ENCODE measurements at regions of chr15 and their contacts with region 1.

Region 1: DNA sequence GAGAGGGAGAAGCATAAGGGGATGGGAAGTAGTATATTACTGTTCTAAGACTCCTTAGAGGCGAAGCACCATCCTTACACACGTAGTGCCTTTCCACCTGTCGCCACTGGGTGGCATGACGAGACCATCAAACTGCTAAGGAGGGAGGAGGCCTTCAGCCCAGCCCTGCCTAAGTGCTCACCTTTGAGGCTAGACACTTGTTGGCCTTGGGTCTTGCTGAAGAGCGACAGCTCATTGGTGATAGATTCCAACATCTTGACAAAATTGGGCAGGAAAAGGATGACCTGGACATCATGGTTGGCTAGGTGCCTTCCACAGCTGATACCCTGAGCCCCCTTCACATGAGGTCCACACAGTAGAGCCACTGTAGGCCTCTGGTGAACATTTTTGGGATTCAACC is 19.6 kb downstream of the CLK3 start:
- DNase-seq: peak; percentile 84
- ATAC-seq: peak; percentile 94
- H3K4me3 Mint-ChIP-seq: no peak overlapping the region
- H3K27ac Mint-ChIP-seq: peak overlapping the region; percentile 39
- H3K4me1 Mint-ChIP-seq: no peaks in the 10 kb centered on the region
- H3K27me3 Mint-ChIP-seq: no peaks in the 10 kb centered on the region
- CTCF ChIP-seq: peak; percentile 89

Region 2: GRCh38 chr15:74352393-74352910 is 282.8 kb before region 1 on chr15:
- CTCF ChIA-PET with region 1: no interaction called
- POLR2A ChIA-PET with region 1: no interaction called
- intact Hi-C with region 1: no loop called
- DNase-seq: no peak
- ATAC-seq: no peak
- H3K4me3 Mint-ChIP-seq: no peak overlapping the region
- H3K27ac Mint-ChIP-seq: no peak overlapping the region
- H3K4me1 Mint-ChIP-seq: no peaks in the 10 kb centered on the region
- H3K27me3 Mint-ChIP-seq: peaks cover 3% of the 10 kb centered on the region
- CTCF ChIP-seq: no peak

Region 3: GRCh38 chr15:74373731-74374647 is 261.2 kb before region 1 on chr15:
- CTCF ChIA-PET with region 1: interaction called, 21 read pairs
- POLR2A ChIA-PET with region 1: interaction called, 3 read pairs
- intact Hi-C with region 1: loop called (anchors 5 kb)
- DNase-seq: peak; percentile 97
- ATAC-seq: peak; percentile 90
- H3K4me3 Mint-ChIP-seq: peak overlapping the region; percentile 74
- H3K27ac Mint-ChIP-seq: peak overlapping the region; percentile 63
- H3K4me1 Mint-ChIP-seq: peaks cover 39% of the 10 kb centered on the region
- H3K27me3 Mint-ChIP-seq: peaks cover 6% of the 10 kb centered on the region
- CTCF ChIP-seq: peak; percentile 92

Region 4: DNA sequence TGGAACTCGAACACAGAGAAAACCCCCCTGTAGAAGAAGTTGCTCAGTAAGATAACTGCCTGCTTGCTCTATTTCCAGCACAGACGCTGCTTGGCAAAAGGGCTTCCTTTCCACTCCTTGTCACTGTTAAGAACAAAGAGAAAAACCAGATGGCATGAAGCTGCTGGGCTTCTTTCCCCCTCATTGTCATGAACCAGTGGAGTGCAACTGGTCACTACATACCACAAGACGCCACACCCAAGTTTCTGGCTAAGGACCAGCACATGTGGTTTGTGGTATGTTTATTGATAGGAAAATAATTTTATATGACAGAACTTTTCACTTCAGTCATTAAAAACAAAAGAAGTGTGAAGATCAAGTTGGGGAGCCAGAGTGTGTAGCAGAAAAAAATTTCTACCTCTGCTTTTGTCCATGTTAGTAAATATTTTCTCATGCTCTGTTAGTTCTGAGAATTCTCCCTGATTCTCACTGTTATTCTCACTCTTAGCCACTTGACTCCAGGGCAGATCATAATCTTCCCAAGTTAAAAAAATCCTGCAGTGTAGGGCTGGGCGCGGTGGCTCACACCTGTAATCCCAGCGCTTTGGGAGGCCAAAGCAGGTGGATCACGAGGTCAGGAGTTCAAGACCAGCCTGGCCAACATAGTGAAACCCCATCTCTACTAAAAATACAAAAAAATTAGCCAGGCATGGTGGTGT is 18.3 kb after region 1 on chr15:
- CTCF ChIA-PET with region 1: interaction called, 16 read pairs
- POLR2A ChIA-PET with region 1: interaction called, 3 read pairs
- intact Hi-C with region 1: no loop called
- DNase-seq: no peak
- ATAC-seq: no peak
- H3K4me3 Mint-ChIP-seq: no peak overlapping the region
- H3K27ac Mint-ChIP-seq: no peak overlapping the region
- H3K4me1 Mint-ChIP-seq: peaks cover 14% of the 10 kb centered on the region
- H3K27me3 Mint-ChIP-seq: no peaks in the 10 kb centered on the region
- CTCF ChIP-seq: no peak

Region 5: DNA sequence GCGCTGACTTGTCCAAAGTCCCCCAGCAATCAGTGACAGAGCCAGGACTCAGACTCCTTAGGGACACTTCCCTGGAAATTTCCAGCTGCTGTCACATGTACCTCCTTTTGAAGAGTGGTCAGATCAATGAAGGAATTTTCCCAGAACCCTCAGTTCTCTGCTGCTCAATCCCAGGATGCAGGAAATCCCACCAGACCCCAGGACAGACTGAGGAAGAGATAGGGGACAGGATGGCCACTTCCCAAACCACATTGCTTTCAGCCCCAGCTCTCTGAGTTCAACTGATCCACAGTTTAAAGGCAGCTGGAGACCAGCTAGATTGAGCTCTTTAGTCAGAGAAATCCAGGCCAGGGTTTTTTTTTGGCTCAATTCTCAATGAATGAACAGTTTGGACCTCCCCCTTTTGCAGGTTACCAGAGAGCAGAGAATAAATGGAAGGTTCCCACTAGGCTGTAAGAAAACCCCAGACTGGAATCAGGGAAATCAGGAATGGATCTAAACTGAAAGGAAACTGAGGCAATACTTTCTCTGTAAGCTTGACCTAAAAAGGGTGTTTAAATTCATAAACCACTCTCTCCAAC is 88.6 kb after region 1 on chr15:
- CTCF ChIA-PET with region 1: interaction called, 10 read pairs
- POLR2A ChIA-PET with region 1: no interaction called
- intact Hi-C with region 1: no loop called
- DNase-seq: no peak
- ATAC-seq: peak; percentile 31
- H3K4me3 Mint-ChIP-seq: peak overlapping the region; percentile 20
- H3K27ac Mint-ChIP-seq: no peak overlapping the region
- H3K4me1 Mint-ChIP-seq: peaks cover 9% of the 10 kb centered on the region
- H3K27me3 Mint-ChIP-seq: peaks cover 16% of the 10 kb centered on the region
- CTCF ChIP-seq: no peak

Region 6: GRCh38 chr15:74781431-74782258 is 146.4 kb after region 1 on chr15 and contains the start of gene CSK:
- CTCF ChIA-PET with region 1: interaction called, 49 read pairs
- POLR2A ChIA-PET with region 1: interaction called, 3 read pairs
- intact Hi-C with region 1: no loop called
- DNase-seq: peak; percentile 76
- ATAC-seq: peak; percentile 40
- H3K4me3 Mint-ChIP-seq: peak within 1 kb of the TSS; percentile 98
- H3K27ac Mint-ChIP-seq: peak within 1 kb of the TSS; percentile 98
- H3K4me1 Mint-ChIP-seq: peaks cover 46% of the 10 kb centered on the region
- H3K27me3 Mint-ChIP-seq: no peaks in the 10 kb centered on the region
- CTCF ChIP-seq: peak; percentile 66
- total RNA-seq, gene CSK: 254 to 260 TPM

Region 7: GRCh38 chr15:74793135-74794028 is 158.2 kb after region 1 on chr15:
- CTCF ChIA-PET with region 1: interaction called, 13 read pairs
- POLR2A ChIA-PET with region 1: interaction called, 3 read pairs
- intact Hi-C with region 1: no loop called
- DNase-seq: peak; percentile 86
- ATAC-seq: peak; percentile 31
- H3K4me3 Mint-ChIP-seq: peak overlapping the region; percentile 19
- H3K27ac Mint-ChIP-seq: peak overlapping the region; percentile 83
- H3K4me1 Mint-ChIP-seq: peaks cover 85% of the 10 kb centered on the region
- H3K27me3 Mint-ChIP-seq: no peaks in the 10 kb centered on the region
- CTCF ChIP-seq: peak; percentile 58

Region 8: DNA sequence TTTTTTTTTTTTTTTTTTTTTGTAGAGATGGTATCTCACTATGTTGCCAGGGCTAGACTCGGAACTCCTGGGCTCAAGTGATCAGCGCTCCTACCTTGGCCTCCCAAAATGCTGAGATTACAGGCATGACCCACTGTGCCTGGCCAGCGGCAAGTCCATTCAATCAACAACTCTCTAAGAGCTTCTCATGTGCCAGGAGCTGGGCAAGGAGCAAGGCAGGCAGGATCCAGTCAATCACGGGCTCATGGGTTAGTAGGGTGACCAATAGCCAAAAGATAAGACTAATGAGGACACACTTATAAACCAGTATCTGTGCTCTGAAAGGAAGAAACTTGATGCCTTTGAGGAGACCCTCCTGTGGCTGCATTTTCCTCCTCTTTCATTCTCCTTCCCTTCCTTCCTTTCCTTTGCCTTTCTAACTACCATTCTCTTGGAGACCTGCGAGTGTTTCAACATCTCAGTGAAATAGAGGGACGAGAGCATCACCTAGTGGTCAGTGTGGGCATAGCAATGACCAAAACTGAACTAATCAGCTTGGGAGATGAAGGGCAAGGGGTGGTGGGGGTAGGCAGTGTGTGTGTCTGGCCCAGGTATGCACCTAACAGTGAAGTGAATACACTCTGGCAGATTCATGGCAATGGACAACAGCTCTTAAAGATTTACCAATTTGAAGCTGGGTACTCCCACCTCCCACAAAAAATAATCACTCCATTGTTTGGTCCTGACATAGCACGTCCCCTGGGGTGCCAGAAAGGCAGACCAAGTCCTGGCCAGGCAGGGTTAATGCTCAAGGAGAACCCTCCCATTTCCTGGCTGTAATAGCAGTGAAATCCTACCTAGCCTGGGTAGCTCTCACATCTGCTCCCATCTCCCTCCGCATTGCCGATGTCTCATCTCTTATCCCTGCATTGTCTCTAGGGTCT is 315.1 kb after region 1 on chr15:
- CTCF ChIA-PET with region 1: interaction called, 20 read pairs
- POLR2A ChIA-PET with region 1: no interaction called
- intact Hi-C with region 1: no loop called
- DNase-seq: peak; percentile 89
- ATAC-seq: peak; percentile 92
- H3K4me3 Mint-ChIP-seq: no peak overlapping the region
- H3K27ac Mint-ChIP-seq: no peak overlapping the region
- H3K4me1 Mint-ChIP-seq: peaks cover 12% of the 10 kb centered on the region
- H3K27me3 Mint-ChIP-seq: no peaks in the 10 kb centered on the region
- CTCF ChIP-seq: peak; percentile 96

Measured in activated CD8-positive, alpha-beta T cell treated with anti-CD3 and anti-CD28 coated beads for 36 hours (primary cell).